Tibial artery (tissue), 4 donors: ENCODE measurements at regions of chr3 and their contacts with region 1.

Region 1: DNA sequence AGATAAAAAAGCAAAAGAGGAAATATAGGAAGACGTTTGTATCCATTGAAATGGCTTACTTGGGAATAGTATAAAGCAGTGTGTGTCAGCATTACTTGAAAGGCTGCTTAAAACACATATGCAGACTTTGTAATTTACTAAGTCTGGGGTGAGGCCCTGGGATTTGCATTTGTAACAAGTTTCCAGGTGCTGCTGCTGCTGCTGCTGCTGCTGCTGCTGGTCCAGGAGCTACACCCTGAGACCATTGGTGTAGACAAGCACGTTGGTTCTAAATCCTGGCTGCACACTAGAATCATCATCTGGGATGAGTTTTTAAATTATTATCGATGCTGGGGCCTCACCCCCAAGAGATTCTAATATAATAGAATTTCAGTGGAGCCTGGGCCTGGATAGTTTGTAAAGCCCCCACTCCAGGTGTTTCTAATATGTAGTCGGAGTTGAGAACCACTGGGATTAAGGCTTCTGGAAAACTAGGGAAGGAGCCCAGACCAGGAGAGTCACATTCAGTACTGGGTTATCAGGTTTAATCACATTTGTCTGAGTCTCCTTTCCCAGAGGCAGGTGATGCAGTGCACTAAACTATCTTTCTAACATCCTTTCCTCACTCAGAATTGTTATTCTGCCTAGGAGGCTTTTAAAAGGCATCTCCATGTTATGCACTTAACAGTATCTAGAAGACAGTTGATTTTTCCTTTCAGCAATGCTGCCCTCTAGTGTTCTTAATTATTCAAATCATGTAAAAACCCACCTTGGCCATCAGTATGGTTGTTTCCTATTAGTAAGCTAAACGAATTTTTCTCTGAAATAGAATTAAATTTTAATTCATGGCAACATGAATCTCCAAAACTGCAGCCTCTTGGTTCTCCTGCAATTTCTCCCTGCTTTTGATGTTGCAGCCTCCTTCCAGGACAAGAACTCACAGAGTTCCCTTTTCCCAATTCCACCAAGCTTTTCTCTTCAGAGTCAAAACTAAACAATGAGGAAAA is 45.4 kb downstream of the SSR3 start:
- DNase-seq: no peak
- H3K4me3 ChIP-seq: no peak overlapping the region
- H3K27ac ChIP-seq: no peak overlapping the region
- H3K4me1 ChIP-seq: peaks cover 0 to 7% (median 0%) of the 10 kb centered on the region in 4 donors
- H3K27me3 ChIP-seq: no peaks in the 10 kb centered on the region
- CTCF ChIP-seq: peak; percentile 61 to 66

Region 2: GRCh38 chr3:156151824-156152428 is 357.6 kb before region 1 on chr3:
- intact Hi-C with region 1: loop called (anchors 2 kb)
- DNase-seq: peak; percentile 59 to 81
- H3K4me3 ChIP-seq: peak overlapping the region; percentile 3 to 5
- H3K27ac ChIP-seq: peak overlapping the region; percentile 70 to 73
- H3K4me1 ChIP-seq: peaks cover 0 to 97% (median 46%) of the 10 kb centered on the region in 4 donors
- H3K27me3 ChIP-seq: no peaks in the 10 kb centered on the region
- CTCF ChIP-seq: peak; percentile 73 to 77

Region 3: GRCh38 chr3:156483961-156484787 is 25.3 kb before region 1 on chr3:
- intact Hi-C with region 1: no loop called
- DNase-seq: no peak
- H3K4me3 ChIP-seq: no peak overlapping the region
- H3K27ac ChIP-seq: peak overlapping the region in 1 of 2 donors; percentile 19
- H3K4me1 ChIP-seq: peaks cover 0 to 36% (median 8%) of the 10 kb centered on the region in 4 donors
- H3K27me3 ChIP-seq: no peaks in the 10 kb centered on the region
- CTCF ChIP-seq: no peak

Region 4: GRCh38 chr3:157099326-157100095 is 590.0 kb after region 1 on chr3:
- intact Hi-C with region 1: no loop called
- DNase-seq: no peak
- H3K4me3 ChIP-seq: no peak overlapping the region
- H3K27ac ChIP-seq: no peak overlapping the region
- H3K4me1 ChIP-seq: peaks cover 0 to 5% (median 2%) of the 10 kb centered on the region in 4 donors
- H3K27me3 ChIP-seq: no peaks in the 10 kb centered on the region
- CTCF ChIP-seq: no peak

Region 5: GRCh38 chr3:157127831-157128767 is 618.6 kb after region 1 on chr3:
- intact Hi-C with region 1: no loop called
- DNase-seq: peak; percentile 77 to 79
- H3K4me3 ChIP-seq: no peak overlapping the region
- H3K27ac ChIP-seq: peak overlapping the region; percentile 42 to 87
- H3K4me1 ChIP-seq: peaks cover 0 to 29% (median 22%) of the 10 kb centered on the region in 4 donors
- H3K27me3 ChIP-seq: no peaks in the 10 kb centered on the region
- CTCF ChIP-seq: no peak